CD4-positive, alpha-beta T cell (primary cell): ENCODE measurements at regions of chr4 and their contacts with region 1.

Region 1: GRCh38 chr4:37686373-37687193 is at the start of gene RELL1:
- DNase-seq: peak; percentile 95 to 100 (median 98)
- ATAC-seq: peak; percentile 81
- H3K4me3 ChIP-seq: peak within 1 kb of the TSS; percentile 78
- H3K4me3 Mint-ChIP-seq: peak within 1 kb of the TSS; percentile 99
- H3K27ac ChIP-seq: peak within 1 kb of the TSS; percentile 88 to 90
- H3K27ac Mint-ChIP-seq: peak within 1 kb of the TSS; percentile 99
- H3K4me1 ChIP-seq: peaks cover 32% of the 10 kb centered on the region
- H3K4me1 Mint-ChIP-seq: peaks cover 43% of the 10 kb centered on the region
- H3K27me3 ChIP-seq: no peaks in the 10 kb centered on the region
- H3K27me3 Mint-ChIP-seq: no peaks in the 10 kb centered on the region
- CTCF ChIP-seq: no peak
- total RNA-seq, gene RELL1: 48.6 to 50.3 TPM

Region 2: DNA sequence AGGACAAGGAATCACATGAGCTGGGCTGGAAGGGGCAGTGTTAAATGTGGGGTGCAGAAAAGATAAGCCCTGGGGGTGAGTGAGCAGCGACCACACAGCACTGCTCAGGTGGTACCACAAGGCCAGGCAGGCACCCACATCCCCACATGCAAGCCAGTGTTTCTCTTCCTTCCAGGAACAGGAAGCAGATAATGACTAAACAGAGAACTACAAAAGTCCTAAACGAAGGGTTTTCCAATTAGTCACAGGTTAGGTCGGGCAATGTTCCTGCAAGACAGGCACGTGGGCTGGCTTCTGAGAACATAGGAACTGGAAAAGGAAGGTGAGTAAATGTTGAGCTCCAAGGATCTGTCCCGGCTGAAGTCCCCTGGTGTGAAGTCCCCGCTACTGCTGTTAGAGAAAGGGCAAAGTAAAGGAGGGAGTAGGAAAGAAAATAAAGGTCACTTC is 19.9 kb before region 1 on chr4:
- CTCF ChIA-PET with region 1: no interaction called
- POLR2A ChIA-PET with region 1: interaction called, 3 read pairs
- intact Hi-C with region 1: loop called in 1 of 2 experiments (anchors 2 kb)
- DNase-seq: peak in 4 of 14 experiments; percentile 5 to 58 (median 34)
- ATAC-seq: no peak
- H3K4me3 ChIP-seq: no peak overlapping the region
- H3K4me3 Mint-ChIP-seq: no peak overlapping the region
- H3K27ac ChIP-seq: no peak overlapping the region
- H3K27ac Mint-ChIP-seq: no peak overlapping the region
- H3K4me1 ChIP-seq: peaks cover 11% of the 10 kb centered on the region
- H3K4me1 Mint-ChIP-seq: peaks cover 74% of the 10 kb centered on the region
- H3K27me3 ChIP-seq: no peaks in the 10 kb centered on the region
- H3K27me3 Mint-ChIP-seq: no peaks in the 10 kb centered on the region
- CTCF ChIP-seq: no peak

Region 3: DNA sequence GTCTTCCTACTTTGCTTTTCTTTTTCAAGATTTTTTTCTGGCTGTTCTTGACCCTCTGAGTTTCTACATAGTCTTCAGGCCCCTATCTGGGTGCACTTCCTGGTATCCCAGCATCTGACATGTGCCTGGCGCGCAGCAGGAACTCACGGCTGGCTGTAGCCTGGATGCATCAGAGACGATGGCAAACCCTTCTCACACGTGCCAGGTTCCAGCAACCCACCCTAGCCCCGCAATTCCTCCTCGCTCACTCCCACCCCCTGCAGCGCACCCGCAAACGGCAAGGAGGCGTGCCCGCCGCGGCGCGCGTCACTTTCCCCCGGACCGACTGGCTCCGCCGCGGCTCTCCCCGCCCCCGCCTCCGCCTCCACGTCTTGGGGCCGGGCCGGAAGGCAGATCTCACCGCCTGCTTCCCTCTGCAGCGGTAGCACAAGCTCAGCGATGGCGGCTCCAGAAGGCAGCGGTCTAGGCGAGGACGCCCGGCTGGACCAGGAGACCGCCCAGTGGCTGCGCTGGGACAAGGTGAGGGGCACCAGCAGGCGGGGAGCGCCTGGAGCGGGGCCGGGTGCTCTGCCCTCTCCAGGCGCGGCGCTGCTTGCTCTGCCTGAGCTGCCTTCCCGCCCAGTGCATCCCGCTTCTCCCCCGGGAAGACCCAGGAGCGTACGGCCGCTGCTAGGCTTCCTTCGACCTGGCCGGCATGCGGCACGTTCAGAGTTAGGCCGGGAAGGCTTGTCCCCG is 139.9 kb after region 1 on chr4 and contains the start of gene PGM2:
- CTCF ChIA-PET with region 1: no interaction called
- POLR2A ChIA-PET with region 1: interaction called, 6 read pairs
- intact Hi-C with region 1: loop called (anchors 1 to 2 kb)
- DNase-seq: peak; percentile 79 to 94 (median 88)
- ATAC-seq: peak; percentile 98
- H3K4me3 ChIP-seq: peak within 1 kb of the TSS; percentile 98
- H3K4me3 Mint-ChIP-seq: peak within 1 kb of the TSS; percentile 91
- H3K27ac ChIP-seq: peak within 1 kb of the TSS; percentile 35 to 63
- H3K27ac Mint-ChIP-seq: peak within 1 kb of the TSS; percentile 91
- H3K4me1 ChIP-seq: peaks cover 27% of the 10 kb centered on the region
- H3K4me1 Mint-ChIP-seq: peaks cover 73% of the 10 kb centered on the region
- H3K27me3 ChIP-seq: no peaks in the 10 kb centered on the region
- H3K27me3 Mint-ChIP-seq: no peaks in the 10 kb centered on the region
- CTCF ChIP-seq: no peak
- total RNA-seq, gene PGM2: 10.7 to 11.8 TPM

Region 4: DNA sequence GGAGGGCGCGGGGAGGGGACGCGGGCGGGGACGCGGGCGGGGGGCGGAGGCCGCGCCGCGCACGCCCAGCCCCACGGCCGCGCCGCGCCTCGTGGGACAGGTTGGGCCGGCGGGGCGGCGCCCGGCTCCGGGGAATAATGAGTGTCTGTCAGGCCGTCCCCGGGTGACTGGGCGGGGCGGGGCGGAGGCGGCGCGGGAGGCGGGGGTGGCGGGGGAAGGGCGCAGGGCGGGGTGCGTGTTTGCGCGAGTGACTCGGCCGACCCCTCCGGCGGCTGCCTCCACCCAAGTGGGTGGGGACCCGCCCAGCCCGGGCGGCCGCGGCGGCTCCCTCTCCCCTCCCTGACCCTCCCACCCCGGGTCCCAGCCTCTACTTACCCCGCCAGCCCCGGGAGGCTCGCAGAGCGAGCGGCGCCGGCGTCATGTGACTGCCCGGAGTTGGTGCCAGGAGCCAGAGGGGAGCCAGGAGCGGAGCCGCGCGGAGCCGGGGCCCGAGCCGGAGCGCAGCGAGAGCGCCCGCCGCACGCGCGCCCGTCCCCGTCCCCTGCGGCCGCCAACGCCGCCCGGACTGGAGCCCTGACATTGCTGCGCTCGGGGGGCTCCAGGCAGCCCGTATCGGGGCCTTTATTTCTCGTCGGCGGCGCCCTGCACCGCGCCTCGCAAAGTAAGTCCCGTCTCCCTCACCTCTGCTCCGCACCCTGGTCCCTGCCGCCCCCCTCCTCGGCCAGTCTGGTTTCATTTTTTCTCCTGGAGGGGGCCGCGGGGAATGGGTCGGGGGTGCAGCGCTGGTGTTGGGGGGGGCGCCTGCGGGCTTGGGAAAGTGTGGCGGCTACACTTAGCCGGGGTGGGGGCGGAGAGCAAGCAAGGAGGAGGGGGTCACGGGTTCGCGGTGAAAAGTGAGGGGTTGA is 977.5 kb after region 1 on chr4 and contains the start of gene KLF3:
- CTCF ChIA-PET with region 1: no interaction called
- POLR2A ChIA-PET with region 1: no interaction called
- intact Hi-C with region 1: loop called in 1 of 2 experiments (anchors 10 kb)
- DNase-seq: peak; percentile 87 to 98 (median 94)
- ATAC-seq: peak; percentile 63
- H3K4me3 ChIP-seq: peak within 1 kb of the TSS; percentile 89
- H3K4me3 Mint-ChIP-seq: peak within 1 kb of the TSS; percentile 99
- H3K27ac ChIP-seq: peak within 1 kb of the TSS; percentile 82 to 94
- H3K27ac Mint-ChIP-seq: peak within 1 kb of the TSS; percentile 91
- H3K4me1 ChIP-seq: peaks cover 39% of the 10 kb centered on the region
- H3K4me1 Mint-ChIP-seq: peaks cover 65% of the 10 kb centered on the region
- H3K27me3 ChIP-seq: no peaks in the 10 kb centered on the region
- H3K27me3 Mint-ChIP-seq: no peaks in the 10 kb centered on the region
- CTCF ChIP-seq: no peak
- total RNA-seq, gene KLF3: 203 to 204 TPM